ENCODE measurements at regions of chr15 and their contacts with region 1.

Region 1: DNA sequence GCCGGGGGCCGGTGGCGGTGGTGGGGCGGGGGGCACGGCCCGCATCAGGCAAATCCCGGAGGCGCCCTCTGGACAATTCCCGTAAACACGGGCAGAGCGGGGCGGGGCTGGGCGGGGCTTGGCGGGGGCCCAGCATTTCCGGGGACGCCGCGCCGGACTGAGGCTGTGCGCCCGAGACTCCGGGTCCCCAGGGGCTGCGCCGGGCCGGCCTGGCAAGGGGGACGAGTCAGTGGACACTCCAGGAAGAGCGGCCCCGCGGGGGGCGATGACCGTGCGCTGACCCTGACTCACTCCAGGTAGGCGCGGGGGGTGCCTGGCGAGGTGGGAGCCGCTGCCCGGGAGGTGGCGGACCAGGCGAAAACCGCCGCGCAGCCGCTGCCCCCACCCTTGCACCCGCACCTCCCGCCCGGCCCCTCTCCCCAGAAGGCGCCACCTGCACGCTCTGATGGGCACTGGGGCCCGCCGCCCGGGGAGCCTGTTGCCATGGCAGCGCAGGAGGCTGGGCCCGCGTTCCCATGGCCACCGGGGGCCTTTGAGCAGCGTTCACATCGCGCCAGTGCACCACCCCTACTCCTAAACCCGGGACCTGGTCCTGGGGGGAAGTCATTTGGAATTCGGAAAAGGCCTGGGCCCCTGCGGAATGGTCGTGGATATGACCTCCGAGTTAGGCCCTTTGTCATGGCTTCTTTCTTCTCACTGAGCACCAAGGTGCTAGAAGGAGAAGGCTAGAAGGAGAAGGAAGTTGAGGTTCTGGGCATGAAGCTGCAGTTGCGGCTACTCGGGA is 16.2 kb upstream of the SEMA4B start:
- DNase-seq: peak; percentile 65
- ATAC-seq: peak; percentile 69
- H3K4me3 ChIP-seq: peak overlapping the region; percentile 83
- H3K27ac ChIP-seq: peak overlapping the region; percentile 95
- H3K4me1 ChIP-seq: peaks cover 19% of the 10 kb centered on the region
- H3K27me3 ChIP-seq: no peaks in the 10 kb centered on the region
- CTCF ChIP-seq: no peak

Region 2: GRCh38 chr15:90165659-90166421 is 19.1 kb before region 1 on chr15:
- CTCF ChIA-PET with region 1: no interaction called
- POLR2A ChIA-PET with region 1: no interaction called
- intact Hi-C with region 1: loop called (anchors 1 kb)
- DNase-seq: peak; percentile 99
- ATAC-seq: peak; percentile 91
- H3K4me3 ChIP-seq: no peak overlapping the region
- H3K27ac ChIP-seq: peak overlapping the region; percentile 100
- H3K4me1 ChIP-seq: peaks cover 52% of the 10 kb centered on the region
- H3K27me3 ChIP-seq: no peaks in the 10 kb centered on the region
- CTCF ChIP-seq: no peak

Region 3: DNA sequence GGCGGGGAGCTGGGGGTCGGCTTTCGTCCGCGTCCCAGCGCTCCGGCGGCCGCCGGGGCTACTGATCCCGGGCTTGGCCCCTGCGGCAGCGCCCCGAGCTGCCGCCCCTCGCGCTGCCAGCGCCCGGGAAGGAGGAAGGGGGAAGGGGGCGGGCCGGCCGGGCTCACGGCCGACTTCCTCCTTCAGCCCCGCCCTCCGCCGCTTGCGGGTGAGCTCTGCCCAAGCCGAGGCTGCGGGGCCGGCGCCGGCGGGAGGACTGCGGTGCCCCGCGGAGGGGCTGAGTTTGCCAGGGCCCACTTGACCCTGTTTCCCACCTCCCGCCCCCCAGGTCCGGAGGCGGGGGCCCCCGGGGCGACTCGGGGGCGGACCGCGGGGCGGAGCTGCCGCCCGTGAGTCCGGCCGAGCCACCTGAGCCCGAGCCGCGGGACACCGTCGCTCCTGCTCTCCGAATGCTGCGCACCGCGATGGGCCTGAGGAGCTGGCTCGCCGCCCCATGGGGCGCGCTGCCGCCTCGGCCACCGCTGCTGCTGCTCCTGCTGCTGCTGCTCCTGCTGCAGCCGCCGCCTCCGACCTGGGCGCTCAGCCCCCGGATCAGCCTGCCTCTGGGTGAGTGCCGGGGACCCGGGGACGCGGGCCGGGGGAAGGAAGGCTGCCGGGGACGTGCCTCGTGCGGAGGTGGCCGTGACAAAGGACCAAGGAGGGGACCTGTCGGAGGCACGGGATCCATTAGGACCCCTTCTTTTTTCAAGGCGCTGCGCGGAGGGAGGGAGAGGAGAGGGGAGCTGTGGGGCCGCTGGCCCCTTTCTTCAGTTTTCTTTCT is 16.4 kb after region 1 on chr15 and contains the start of gene SEMA4B:
- CTCF ChIA-PET with region 1: no interaction called
- POLR2A ChIA-PET with region 1: interaction called, 3 read pairs
- intact Hi-C with region 1: loop called (anchors 2 kb)
- DNase-seq: peak; percentile 58
- ATAC-seq: peak; percentile 71
- H3K4me3 ChIP-seq: peak within 1 kb of the TSS; percentile 100
- H3K27ac ChIP-seq: peak within 1 kb of the TSS; percentile 82
- H3K4me1 ChIP-seq: peaks cover 39% of the 10 kb centered on the region
- H3K27me3 ChIP-seq: no peaks in the 10 kb centered on the region
- CTCF ChIP-seq: no peak
- total RNA-seq, gene SEMA4B: 114 and 175 TPM in 2 replicates

Region 4: DNA sequence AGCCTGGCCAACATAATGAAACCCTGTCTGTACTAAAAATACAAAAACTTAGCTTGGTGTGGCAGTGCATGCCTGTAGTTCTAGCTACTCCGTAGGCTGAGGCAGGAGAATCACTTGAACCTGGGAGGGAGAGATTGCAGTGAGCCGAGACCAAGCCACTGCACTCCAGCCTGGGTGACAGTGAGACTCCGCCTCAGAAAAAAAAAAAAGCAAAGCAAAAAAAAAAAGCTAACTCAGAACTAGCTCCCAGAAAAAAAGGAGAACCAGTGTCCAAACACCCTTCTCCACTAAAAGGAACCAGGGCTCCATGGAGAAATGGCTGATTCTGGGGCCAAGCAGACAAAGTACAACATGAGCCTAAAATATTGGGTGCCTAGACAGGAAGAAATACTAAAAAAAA is 328.0 kb after region 1 on chr15:
- CTCF ChIA-PET with region 1: no interaction called
- POLR2A ChIA-PET with region 1: no interaction called
- intact Hi-C with region 1: no loop called
- DNase-seq: no peak
- ATAC-seq: no peak
- H3K4me3 ChIP-seq: no peak overlapping the region
- H3K27ac ChIP-seq: no peak overlapping the region
- H3K4me1 ChIP-seq: no peaks in the 10 kb centered on the region
- H3K27me3 ChIP-seq: no peaks in the 10 kb centered on the region
- CTCF ChIP-seq: no peak